Activated CD8-positive, alpha-beta T cell treated with anti-CD3 and anti-CD28 coated beads for 36 hours (primary cell): ENCODE measurements at regions of chr11 and their contacts with region 1.

Region 1: GRCh38 chr11:18540207-18541009 is 13.7 kb upstream of the TSG101 start:
- DNase-seq: no peak
- ATAC-seq: peak; percentile 78
- H3K4me3 Mint-ChIP-seq: no peak overlapping the region
- H3K27ac Mint-ChIP-seq: no peak overlapping the region
- H3K4me1 Mint-ChIP-seq: no peaks in the 10 kb centered on the region
- H3K27me3 Mint-ChIP-seq: no peaks in the 10 kb centered on the region
- CTCF ChIP-seq: peak; percentile 70

Region 2: DNA sequence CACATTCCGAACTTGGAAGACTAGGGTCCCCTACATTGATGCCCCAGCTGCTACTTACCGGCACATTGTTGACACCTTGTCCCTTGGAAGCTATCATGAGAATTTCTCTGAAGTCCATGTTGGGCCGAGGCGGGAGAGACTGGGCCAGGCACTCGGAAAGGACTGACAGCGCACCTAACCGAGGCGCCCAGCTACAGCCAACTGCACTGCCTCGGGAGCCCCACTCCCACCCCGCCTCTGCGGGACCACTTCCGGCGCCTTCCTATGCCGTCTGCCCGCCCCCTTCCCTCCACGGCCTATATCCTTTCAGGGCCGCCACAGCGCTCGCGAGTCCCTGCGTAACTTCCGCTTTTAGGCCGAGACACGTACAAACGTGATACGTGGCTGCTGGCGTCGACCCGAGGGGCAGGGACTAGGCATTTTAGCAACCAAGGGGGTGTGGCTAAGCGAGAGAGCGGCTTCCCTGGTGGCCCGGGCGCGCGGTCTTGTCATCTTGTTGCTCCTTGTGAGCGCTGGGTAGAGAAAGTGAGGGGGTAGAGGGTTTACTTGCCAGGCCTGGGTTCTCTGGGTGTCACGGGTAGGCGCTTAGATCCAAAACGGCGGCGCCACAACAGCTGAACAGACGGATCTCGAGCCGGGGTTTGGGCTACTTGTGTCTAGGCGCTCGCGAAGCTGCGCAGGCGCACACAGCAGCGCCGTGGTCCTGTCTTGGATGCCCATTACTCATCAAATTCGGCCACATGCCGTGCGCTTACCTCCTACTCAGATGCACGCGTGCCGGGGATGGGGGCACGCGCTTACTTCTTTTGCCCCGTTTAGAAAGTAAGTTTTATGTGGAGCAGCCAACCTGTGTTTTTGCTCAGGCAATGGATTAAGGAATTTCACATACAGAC is 94.0 kb after region 1 on chr11 and contains the start of gene SPTY2D1:
- CTCF ChIA-PET with region 1: interaction called, 18 read pairs
- POLR2A ChIA-PET with region 1: no interaction called
- intact Hi-C with region 1: no loop called
- DNase-seq: peak; percentile 100
- ATAC-seq: peak; percentile 98
- H3K4me3 Mint-ChIP-seq: peak within 1 kb of the TSS; percentile 89
- H3K27ac Mint-ChIP-seq: peak within 1 kb of the TSS; percentile 97
- H3K4me1 Mint-ChIP-seq: peaks cover 21% of the 10 kb centered on the region
- H3K27me3 Mint-ChIP-seq: no peaks in the 10 kb centered on the region
- CTCF ChIP-seq: no peak
- total RNA-seq, gene SPTY2D1: 21.3 TPM

Region 3: GRCh38 chr11:18650859-18651557 is 110.6 kb after region 1 on chr11:
- CTCF ChIA-PET with region 1: interaction called, 41 read pairs
- POLR2A ChIA-PET with region 1: no interaction called
- intact Hi-C with region 1: loop called (anchors 1 kb)
- DNase-seq: peak; percentile 65
- ATAC-seq: peak; percentile 69
- H3K4me3 Mint-ChIP-seq: no peak overlapping the region
- H3K27ac Mint-ChIP-seq: no peak overlapping the region
- H3K4me1 Mint-ChIP-seq: peaks cover 2% of the 10 kb centered on the region
- H3K27me3 Mint-ChIP-seq: no peaks in the 10 kb centered on the region
- CTCF ChIP-seq: peak; percentile 65

Region 4: DNA sequence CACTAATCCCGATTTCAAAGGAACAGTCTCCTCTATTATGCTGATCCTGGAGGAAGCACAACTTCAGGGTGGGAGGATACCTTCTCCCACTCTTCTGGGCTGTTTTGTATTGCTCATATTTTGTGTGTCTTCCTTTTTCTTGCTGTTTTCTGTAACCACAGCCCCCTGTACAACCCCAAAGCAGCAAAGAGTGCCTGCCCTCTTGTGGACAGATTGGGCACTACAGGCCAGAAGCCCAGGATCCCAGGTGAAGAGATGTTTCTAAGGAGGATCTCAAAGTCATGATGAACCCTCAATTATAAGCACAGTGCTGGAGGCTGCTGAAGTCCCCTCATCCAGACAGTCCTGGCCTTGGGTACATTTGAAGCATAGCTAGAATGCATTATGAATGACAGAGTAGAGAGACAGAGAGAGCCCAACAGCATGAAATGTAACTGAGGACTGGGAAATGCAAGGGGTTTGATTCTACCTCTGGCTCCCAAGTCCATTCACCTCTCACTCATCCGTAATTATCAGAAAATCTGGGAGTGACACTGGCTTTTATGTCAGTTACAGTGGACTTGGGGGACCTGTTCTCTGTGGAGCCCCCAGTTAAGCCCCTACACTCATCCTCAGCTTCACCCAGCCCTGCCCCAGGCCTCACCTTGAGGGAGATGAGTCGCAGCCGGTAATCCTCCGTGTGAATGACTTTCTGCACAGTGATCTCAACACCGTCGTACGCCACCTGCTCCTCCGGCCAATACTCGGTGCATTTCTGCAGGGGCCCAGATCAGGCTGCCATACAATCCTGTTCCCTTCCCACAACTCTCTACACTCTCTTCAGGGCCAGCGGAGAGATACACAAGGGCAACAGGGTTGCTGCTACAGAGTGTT is 191.8 kb after region 1 on chr11:
- CTCF ChIA-PET with region 1: interaction called, 33 read pairs
- POLR2A ChIA-PET with region 1: no interaction called
- intact Hi-C with region 1: loop called (anchors 5 kb)
- DNase-seq: peak; percentile 82
- ATAC-seq: peak; percentile 84
- H3K4me3 Mint-ChIP-seq: no peak overlapping the region
- H3K27ac Mint-ChIP-seq: no peak overlapping the region
- H3K4me1 Mint-ChIP-seq: peaks cover 5% of the 10 kb centered on the region
- H3K27me3 Mint-ChIP-seq: no peaks in the 10 kb centered on the region
- CTCF ChIP-seq: peak; percentile 95

Region 5: DNA sequence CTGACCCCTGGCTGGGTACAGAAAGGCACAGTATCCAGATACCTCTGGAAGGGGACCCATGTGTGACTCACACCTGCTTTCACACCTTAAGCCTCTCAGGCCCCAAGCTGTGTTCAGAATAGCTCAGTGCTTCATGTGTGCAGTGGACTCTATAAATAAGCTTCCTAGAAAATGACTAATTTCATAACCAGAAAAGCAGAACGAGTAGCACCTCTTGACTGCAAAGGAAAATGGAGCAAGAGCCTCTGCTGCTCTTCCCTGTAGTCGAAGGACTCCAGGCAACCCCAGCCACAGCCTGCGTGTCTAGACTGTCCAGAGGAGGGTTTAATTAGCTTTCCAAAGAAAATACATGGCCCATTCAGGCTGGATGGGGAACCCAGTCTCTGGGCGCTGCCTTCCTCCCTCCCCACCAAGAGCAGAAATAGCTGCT is 228.1 kb after region 1 on chr11:
- CTCF ChIA-PET with region 1: interaction called, 11 read pairs
- POLR2A ChIA-PET with region 1: no interaction called
- intact Hi-C with region 1: no loop called
- DNase-seq: peak; percentile 58
- ATAC-seq: peak; percentile 76
- H3K4me3 Mint-ChIP-seq: no peak overlapping the region
- H3K27ac Mint-ChIP-seq: no peak overlapping the region
- H3K4me1 Mint-ChIP-seq: peaks cover 28% of the 10 kb centered on the region
- H3K27me3 Mint-ChIP-seq: peaks cover 12% of the 10 kb centered on the region
- CTCF ChIP-seq: no peak